MCF 10A (cell line): ENCODE measurements at regions of chr1 and their contacts with region 1.

Region 1: DNA sequence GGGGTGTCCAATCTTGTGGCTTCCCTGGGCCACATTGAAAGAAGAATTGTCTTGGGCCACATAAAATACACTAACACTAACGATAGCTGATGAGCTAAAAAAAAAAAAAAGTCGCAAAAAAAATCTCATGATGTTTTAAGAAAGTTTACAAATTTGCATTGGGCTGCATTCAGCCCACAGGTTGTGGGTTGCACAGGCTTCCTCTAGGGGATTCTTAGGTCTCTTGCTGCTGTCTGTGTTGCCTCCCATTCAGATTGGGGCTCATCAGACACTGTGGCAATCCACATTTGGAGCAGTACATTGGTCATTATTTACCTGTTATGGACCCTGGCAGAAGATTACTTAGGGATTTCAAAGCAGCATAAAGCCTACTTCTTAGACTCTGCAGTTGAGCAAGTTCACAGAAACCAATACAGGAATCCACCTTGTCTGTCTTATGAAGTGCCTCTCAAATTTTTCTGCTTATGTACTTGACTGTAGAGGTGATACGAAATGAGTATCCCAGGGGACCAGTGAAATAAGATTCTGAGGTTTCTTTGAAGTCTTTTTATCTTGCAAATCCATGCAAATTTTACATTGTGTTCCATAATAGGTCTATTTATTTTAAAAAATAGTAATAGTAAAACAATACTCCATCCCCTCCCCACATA is 205.5 kb downstream of the RPS6KC1 start:
- DNase-seq: no peak
- H3K4me3 Mint-ChIP-seq: no peak overlapping the region
- H3K27ac Mint-ChIP-seq: no peak overlapping the region
- H3K4me1 Mint-ChIP-seq: no peaks in the 10 kb centered on the region
- H3K27me3 Mint-ChIP-seq: no peaks in the 10 kb centered on the region
- CTCF ChIP-seq: no peak

Region 2: GRCh38 chr1:213154056-213154685 is 102.4 kb before region 1 on chr1:
- CTCF ChIA-PET with region 1: no interaction called
- POLR2A ChIA-PET with region 1: no interaction called
- intact Hi-C with region 1: no loop called
- DNase-seq: no peak
- H3K4me3 Mint-ChIP-seq: no peak overlapping the region
- H3K27ac Mint-ChIP-seq: peak overlapping the region; percentile 8
- H3K4me1 Mint-ChIP-seq: peaks cover 5% of the 10 kb centered on the region
- H3K27me3 Mint-ChIP-seq: no peaks in the 10 kb centered on the region
- CTCF ChIP-seq: no peak

Region 3: GRCh38 chr1:213244664-213245091 is 11.9 kb before region 1 on chr1:
- CTCF ChIA-PET with region 1: interaction called, 10 read pairs
- POLR2A ChIA-PET with region 1: no interaction called
- intact Hi-C with region 1: no loop called
- DNase-seq: peak; percentile 88
- H3K4me3 Mint-ChIP-seq: no peak overlapping the region
- H3K27ac Mint-ChIP-seq: peak overlapping the region; percentile 17
- H3K4me1 Mint-ChIP-seq: no peaks in the 10 kb centered on the region
- H3K27me3 Mint-ChIP-seq: no peaks in the 10 kb centered on the region
- CTCF ChIP-seq: peak; percentile 97

Region 4: GRCh38 chr1:213268221-213268620 is 11.7 kb after region 1 on chr1:
- CTCF ChIA-PET with region 1: interaction called, 3 read pairs
- POLR2A ChIA-PET with region 1: no interaction called
- intact Hi-C with region 1: loop called (anchors 1 kb)
- DNase-seq: no peak
- H3K4me3 Mint-ChIP-seq: no peak overlapping the region
- H3K27ac Mint-ChIP-seq: no peak overlapping the region
- H3K4me1 Mint-ChIP-seq: no peaks in the 10 kb centered on the region
- H3K27me3 Mint-ChIP-seq: no peaks in the 10 kb centered on the region
- CTCF ChIP-seq: no peak

Region 5: DNA sequence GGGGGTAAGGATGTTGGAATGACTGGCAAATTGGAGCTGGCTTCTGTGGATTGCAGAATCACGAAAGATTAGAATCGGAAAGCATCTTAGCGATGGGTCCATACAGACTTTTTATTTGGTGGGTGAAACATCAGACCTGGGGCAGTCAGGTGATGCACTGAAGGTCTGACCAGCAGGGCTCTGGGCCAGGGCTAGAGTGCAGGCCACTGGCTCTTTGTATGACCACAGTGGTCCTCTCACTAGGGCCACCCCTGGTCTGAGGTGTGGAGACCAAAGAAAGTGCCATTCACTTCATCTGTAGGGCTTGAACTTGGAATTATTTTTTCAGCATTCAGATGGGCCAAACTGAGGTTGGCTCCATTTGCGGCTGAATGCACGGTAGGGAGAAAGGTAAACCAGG is 100.8 kb after region 1 on chr1:
- CTCF ChIA-PET with region 1: no interaction called
- POLR2A ChIA-PET with region 1: no interaction called
- intact Hi-C with region 1: no loop called
- DNase-seq: no peak
- H3K4me3 Mint-ChIP-seq: no peak overlapping the region
- H3K27ac Mint-ChIP-seq: no peak overlapping the region
- H3K4me1 Mint-ChIP-seq: no peaks in the 10 kb centered on the region
- H3K27me3 Mint-ChIP-seq: peaks cover 23% of the 10 kb centered on the region
- CTCF ChIP-seq: no peak